ENCODE measurements at regions of chr6 and their contacts with region 1.

Region 1: DNA sequence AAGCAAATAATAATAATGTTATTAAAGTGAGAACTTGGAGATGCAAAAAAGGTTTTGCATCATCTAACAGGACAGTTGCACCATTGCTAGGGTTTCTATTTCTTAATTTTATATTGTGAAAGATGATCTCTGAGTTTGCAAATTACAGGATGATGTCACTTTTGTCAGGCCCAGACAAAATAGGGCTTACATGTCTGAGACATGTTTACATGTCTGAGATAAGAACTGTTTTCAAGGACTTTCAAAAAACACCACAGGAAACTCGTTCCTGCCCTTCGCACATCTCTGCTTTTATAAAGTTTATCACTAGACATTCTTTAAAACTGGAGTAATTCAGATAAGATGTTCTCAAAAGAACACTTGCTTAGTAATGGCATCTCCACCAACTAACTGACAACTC is 1075.8 kb upstream of the MANEA start:
- DNase-seq: no peak
- ATAC-seq: no peak
- H3K4me3 Mint-ChIP-seq: no peak overlapping the region
- H3K27ac Mint-ChIP-seq: no peak overlapping the region
- H3K4me1 Mint-ChIP-seq: no peaks in the 10 kb centered on the region
- H3K27me3 Mint-ChIP-seq: no peaks in the 10 kb centered on the region

Region 2: GRCh38 chr6:94464018-94464510 is 37.5 kb before region 1 on chr6:
- CTCF ChIA-PET with region 1: no interaction called
- POLR2A ChIA-PET with region 1: no interaction called
- intact Hi-C with region 1: loop called in 1 of 2 experiments (anchors 2 kb)
- DNase-seq: no peak
- ATAC-seq: no peak
- H3K4me3 Mint-ChIP-seq: no peak overlapping the region
- H3K27ac Mint-ChIP-seq: no peak overlapping the region
- H3K4me1 Mint-ChIP-seq: no peaks in the 10 kb centered on the region
- H3K27me3 Mint-ChIP-seq: no peaks in the 10 kb centered on the region

Region 3: GRCh38 chr6:94535794-94536193 is 34.2 kb after region 1 on chr6:
- CTCF ChIA-PET with region 1: no interaction called
- POLR2A ChIA-PET with region 1: no interaction called
- intact Hi-C with region 1: no loop called
- DNase-seq: no peak
- ATAC-seq: no peak
- H3K4me3 Mint-ChIP-seq: no peak overlapping the region
- H3K27ac Mint-ChIP-seq: no peak overlapping the region
- H3K4me1 Mint-ChIP-seq: no peaks in the 10 kb centered on the region
- H3K27me3 Mint-ChIP-seq: no peaks in the 10 kb centered on the region

Region 4: DNA sequence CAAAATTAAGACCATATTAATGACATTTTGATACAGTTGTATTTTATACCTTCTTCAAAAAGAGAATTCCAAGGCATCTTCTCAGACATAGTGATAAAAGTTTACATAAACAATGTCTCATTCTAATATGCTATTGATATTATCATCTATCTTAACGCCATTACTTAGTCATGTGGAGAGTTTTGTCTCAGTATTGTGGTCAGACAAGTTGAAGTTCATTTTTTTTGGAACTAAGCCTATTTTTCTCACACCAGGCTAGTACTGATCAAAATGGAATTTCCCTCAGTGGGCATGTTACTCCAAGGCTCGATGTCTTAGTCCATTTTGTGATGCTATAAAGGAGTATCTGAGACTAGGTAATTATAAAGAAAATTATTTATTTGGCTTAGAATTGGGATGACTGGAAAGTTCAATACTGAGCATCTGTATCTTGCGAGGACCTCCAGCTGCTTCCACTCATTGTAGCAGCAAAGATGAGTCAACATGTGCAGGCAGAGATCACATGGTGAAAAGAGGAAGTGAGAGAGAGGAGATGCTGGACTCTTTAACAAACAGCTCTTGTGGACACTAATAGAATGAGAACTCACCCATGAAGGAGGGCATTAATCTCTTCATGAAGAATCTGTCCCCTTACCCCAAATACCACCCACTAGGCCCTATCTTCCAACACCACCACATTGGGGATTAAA is 250.2 kb after region 1 on chr6:
- CTCF ChIA-PET with region 1: no interaction called
- POLR2A ChIA-PET with region 1: no interaction called
- intact Hi-C with region 1: no loop called
- DNase-seq: no peak
- ATAC-seq: no peak
- H3K4me3 Mint-ChIP-seq: no peak overlapping the region
- H3K27ac Mint-ChIP-seq: no peak overlapping the region
- H3K4me1 Mint-ChIP-seq: no peaks in the 10 kb centered on the region
- H3K27me3 Mint-ChIP-seq: no peaks in the 10 kb centered on the region